Heart right ventricle (tissue), 16 donors: ENCODE measurements at regions of chr12 and their contacts with region 1.

Region 1: DNA sequence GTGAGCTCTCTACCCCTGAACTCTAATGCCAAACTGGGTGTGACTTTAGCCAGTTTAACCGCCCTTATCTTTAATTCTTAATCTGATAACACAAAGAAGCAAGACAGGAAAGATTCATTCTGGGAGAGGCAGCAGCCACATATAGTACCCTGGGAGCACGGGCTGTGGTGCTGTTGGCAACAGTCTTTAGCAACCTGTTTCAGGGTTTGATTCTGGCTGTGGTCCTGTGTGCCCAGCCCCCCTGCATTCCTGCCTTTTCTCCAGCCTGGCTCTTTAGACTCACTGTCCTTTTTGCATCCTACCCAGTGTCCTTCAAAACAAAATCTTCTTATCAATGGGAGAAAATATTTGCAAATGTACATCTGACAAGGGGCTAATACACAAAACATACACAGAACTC is 275.2 kb downstream of the GXYLT1 start:
- DNase-seq: no peak
- ATAC-seq: no peak
- H3K4me3 ChIP-seq: no peak overlapping the region
- H3K27ac ChIP-seq: no peak overlapping the region
- H3K4me1 ChIP-seq: no peaks in the 10 kb centered on the region
- H3K27me3 ChIP-seq: peaks cover 0 to 3% (median 0%) of the 10 kb centered on the region in 7 donors
- CTCF ChIP-seq: no peak

Region 2: GRCh38 chr12:41653386-41654326 is 215.8 kb before region 1 on chr12:
- intact Hi-C with region 1: no loop called
- DNase-seq: no peak
- ATAC-seq: no peak
- H3K4me3 ChIP-seq: no peak overlapping the region
- H3K27ac ChIP-seq: no peak overlapping the region
- H3K4me1 ChIP-seq: no peaks in the 10 kb centered on the region
- H3K27me3 ChIP-seq: no peaks in the 10 kb centered on the region
- CTCF ChIP-seq: no peak

Region 3: GRCh38 chr12:42002563-42002962 is 133.1 kb after region 1 on chr12:
- intact Hi-C with region 1: loop called in 1 of 10 experiments (anchors 10 kb)
- DNase-seq: no peak
- ATAC-seq: no peak
- H3K4me3 ChIP-seq: no peak overlapping the region
- H3K27ac ChIP-seq: no peak overlapping the region
- H3K4me1 ChIP-seq: no peaks in the 10 kb centered on the region
- H3K27me3 ChIP-seq: no peaks in the 10 kb centered on the region
- CTCF ChIP-seq: no peak

Region 4: DNA sequence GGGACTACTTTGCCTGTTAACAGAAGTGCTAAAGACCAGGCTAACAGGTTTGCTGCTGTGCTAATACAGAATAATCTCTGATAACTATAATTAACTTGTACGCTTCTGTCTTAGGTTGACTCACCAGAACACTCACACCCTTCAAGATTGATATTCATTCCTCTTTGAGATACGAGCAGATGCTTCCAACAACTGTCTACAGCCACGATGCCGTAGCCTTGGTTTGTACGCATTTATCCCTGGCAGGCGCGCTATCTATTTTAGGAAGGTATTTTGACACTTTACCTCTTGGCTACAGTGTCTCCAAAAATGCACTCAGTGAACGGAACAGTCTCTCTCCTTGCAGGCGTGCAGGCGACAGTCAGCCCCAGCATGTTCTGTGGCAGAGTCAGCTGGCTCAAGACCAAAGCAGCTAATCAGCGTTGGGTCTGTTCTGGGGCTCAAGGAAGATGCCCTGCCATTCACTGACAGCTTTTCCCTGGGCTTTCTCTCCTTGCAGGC is 866.5 kb after region 1 on chr12:
- intact Hi-C with region 1: no loop called
- DNase-seq: peak; percentile 55 to 73
- ATAC-seq: peak; percentile 85 to 97 (median 94)
- H3K4me3 ChIP-seq: peak overlapping the region in 6 of 10 donors; percentile 11 to 36 (median 24)
- H3K27ac ChIP-seq: peak overlapping the region; percentile 2 to 84 (median 76)
- H3K4me1 ChIP-seq: peaks cover 0 to 41% (median 10%) of the 10 kb centered on the region in 9 donors
- H3K27me3 ChIP-seq: no peaks in the 10 kb centered on the region
- CTCF ChIP-seq: no peak